Activated CD4-positive, alpha-beta memory T cell treated with anti-CD3 and anti-CD28 coated beads for 36 hours (primary cell): ENCODE measurements at regions of chr2 and their contacts with region 1.

Region 1: DNA sequence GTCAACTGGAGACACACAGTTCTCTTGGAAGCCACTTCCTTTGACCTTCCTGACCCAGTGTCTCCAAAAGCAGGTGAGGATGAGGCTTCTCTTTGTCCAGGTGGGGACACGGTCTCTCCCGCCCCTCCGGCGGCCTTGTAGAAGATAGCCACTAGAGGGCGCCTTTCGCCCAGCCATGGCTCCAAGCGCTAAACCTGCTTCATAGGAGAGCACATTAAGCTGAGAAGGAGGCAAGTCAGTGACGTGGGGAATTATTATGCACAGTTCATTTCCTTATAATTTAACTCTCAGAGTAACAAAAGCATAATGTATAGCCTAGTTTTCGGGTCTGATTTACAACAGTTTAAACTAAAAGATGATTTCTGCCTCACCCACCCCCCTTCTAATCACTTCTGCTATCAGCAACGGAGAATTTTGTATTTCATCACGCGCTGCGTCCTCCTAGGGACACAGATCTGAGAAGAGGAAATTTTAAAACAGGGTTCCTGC is 208.7 kb downstream of the ICOS start:
- DNase-seq: peak; percentile 88
- H3K4me3 Mint-ChIP-seq: peak overlapping the region; percentile 73
- H3K27ac Mint-ChIP-seq: no peak overlapping the region
- H3K4me1 Mint-ChIP-seq: peaks cover 10% of the 10 kb centered on the region
- H3K27me3 Mint-ChIP-seq: peaks cover 12% of the 10 kb centered on the region

Region 2: GRCh38 chr2:204159526-204159925 is 14.2 kb after region 1 on chr2:
- CTCF ChIA-PET with region 1: interaction called, 10 read pairs
- POLR2A ChIA-PET with region 1: no interaction called
- intact Hi-C with region 1: no loop called
- DNase-seq: no peak
- H3K4me3 Mint-ChIP-seq: no peak overlapping the region
- H3K27ac Mint-ChIP-seq: no peak overlapping the region
- H3K4me1 Mint-ChIP-seq: no peaks in the 10 kb centered on the region
- H3K27me3 Mint-ChIP-seq: no peaks in the 10 kb centered on the region

Region 3: GRCh38 chr2:204170411-204170810 is 25.1 kb after region 1 on chr2:
- CTCF ChIA-PET with region 1: interaction called, 10 read pairs
- POLR2A ChIA-PET with region 1: no interaction called
- intact Hi-C with region 1: no loop called
- DNase-seq: no peak
- H3K4me3 Mint-ChIP-seq: no peak overlapping the region
- H3K27ac Mint-ChIP-seq: no peak overlapping the region
- H3K4me1 Mint-ChIP-seq: no peaks in the 10 kb centered on the region
- H3K27me3 Mint-ChIP-seq: no peaks in the 10 kb centered on the region

Region 4: GRCh38 chr2:204260162-204260877 is 115.0 kb after region 1 on chr2:
- CTCF ChIA-PET with region 1: interaction called, 6 read pairs
- POLR2A ChIA-PET with region 1: no interaction called
- intact Hi-C with region 1: loop called (anchors 1 kb)
- DNase-seq: peak; percentile 53
- H3K4me3 Mint-ChIP-seq: no peak overlapping the region
- H3K27ac Mint-ChIP-seq: no peak overlapping the region
- H3K4me1 Mint-ChIP-seq: no peaks in the 10 kb centered on the region
- H3K27me3 Mint-ChIP-seq: peaks cover 29% of the 10 kb centered on the region

Region 5: DNA sequence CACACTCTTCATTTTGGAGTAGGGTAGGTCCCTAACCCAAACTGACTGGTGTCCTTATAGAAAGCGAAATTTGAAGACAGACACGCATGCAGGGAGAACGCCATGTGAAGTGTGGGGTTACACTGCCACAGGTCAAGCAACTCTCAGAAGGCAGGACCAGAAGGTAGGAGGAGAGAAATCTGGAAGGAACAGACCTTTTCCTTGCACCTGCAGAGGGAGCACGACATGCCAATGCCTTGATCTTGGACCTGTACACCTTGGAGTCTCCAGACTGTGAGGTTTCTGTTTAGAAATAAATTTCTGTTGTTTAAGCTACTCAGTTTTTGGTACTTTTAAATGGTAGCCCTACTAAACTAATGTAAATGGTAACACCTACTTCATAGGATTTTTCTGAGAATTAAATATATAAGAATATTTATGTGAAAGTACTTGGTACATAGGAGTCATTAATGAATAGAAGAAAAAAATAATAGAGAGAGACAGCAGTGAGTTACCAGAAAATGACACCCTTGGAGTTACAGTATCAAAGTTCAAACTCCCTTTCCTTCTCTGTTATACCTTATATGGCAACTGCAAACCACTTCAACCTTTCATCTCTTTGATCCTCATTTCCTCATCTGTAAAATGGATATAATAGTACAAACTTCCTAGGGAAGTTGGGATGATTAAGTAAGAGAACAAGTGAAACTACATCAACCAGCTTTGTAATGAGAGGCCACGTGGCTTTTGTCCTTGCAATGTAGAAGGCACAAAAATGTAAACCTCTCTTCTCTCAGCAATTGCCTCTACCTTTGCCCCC is 215.1 kb after region 1 on chr2:
- CTCF ChIA-PET with region 1: no interaction called
- POLR2A ChIA-PET with region 1: no interaction called
- intact Hi-C with region 1: no loop called
- DNase-seq: no peak
- H3K4me3 Mint-ChIP-seq: no peak overlapping the region
- H3K27ac Mint-ChIP-seq: no peak overlapping the region
- H3K4me1 Mint-ChIP-seq: no peaks in the 10 kb centered on the region
- H3K27me3 Mint-ChIP-seq: no peaks in the 10 kb centered on the region